ENCODE measurements at regions of chr16 and their contacts with region 1.

Region 1: DNA sequence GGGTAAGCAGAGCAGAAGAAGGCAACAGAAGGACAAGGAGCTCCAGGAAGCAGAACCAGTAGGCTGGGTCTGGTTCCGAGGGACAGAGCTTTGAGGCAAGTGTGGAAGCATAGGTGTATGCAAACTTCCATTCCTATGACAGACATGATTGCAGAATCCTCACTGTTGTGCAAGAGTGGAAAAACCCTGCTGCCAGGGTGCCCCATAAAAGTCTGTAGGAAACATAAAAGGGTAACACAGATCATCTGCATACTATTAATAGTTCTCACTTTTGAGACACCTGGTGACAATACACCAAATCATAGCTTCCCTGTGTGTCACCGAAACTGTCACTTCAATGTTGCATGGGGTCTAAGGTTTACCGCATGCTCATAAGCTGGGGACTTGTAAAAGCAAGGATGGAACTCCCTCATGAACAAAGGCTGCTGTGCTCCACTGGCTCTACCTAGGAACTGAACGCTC is 39.7 kb downstream of the ARHGAP17 start:
- DNase-seq: peak in 1 of 2 donors; percentile 72
- ATAC-seq: peak; percentile 78 to 84
- H3K4me3 ChIP-seq: no peak overlapping the region
- H3K27ac ChIP-seq: peak overlapping the region; percentile 67 to 89 (median 78)
- H3K4me1 ChIP-seq: peaks cover 68 to 81% of the 10 kb centered on the region in 2 donors
- H3K27me3 ChIP-seq: no peaks in the 10 kb centered on the region
- CTCF ChIP-seq: no peak
- POLR2A ChIP-seq: no peak

Region 2: GRCh38 chr16:24776501-24777220 is 198.8 kb before region 1 on chr16:
- in situ Hi-C with region 1: no loop called
- intact Hi-C with region 1: loop called (anchors 10 kb)
- DNase-seq: peak; percentile 73 to 75
- ATAC-seq: peak; percentile 93 to 96
- H3K4me3 ChIP-seq: peak overlapping the region in 1 of 4 donors; percentile 4
- H3K27ac ChIP-seq: peak overlapping the region; percentile 83 to 88 (median 86)
- H3K4me1 ChIP-seq: peaks cover 50 to 58% of the 10 kb centered on the region in 2 donors
- H3K27me3 ChIP-seq: no peaks in the 10 kb centered on the region
- CTCF ChIP-seq: no peak
- POLR2A ChIP-seq: no peak

Region 3: GRCh38 chr16:24999856-25000461 is 24.5 kb after region 1 on chr16:
- in situ Hi-C with region 1: no loop called
- intact Hi-C with region 1: loop called (anchors 1 kb)
- DNase-seq: peak; percentile 69 to 77
- ATAC-seq: peak; percentile 95 to 96
- H3K4me3 ChIP-seq: peak overlapping the region in 2 of 4 donors; percentile 1 to 12
- H3K27ac ChIP-seq: peak overlapping the region; percentile 75 to 88 (median 82)
- H3K4me1 ChIP-seq: peaks cover 60 to 65% of the 10 kb centered on the region in 2 donors
- H3K27me3 ChIP-seq: no peaks in the 10 kb centered on the region
- CTCF ChIP-seq: no peak
- POLR2A ChIP-seq: peak in 1 of 2 donors; percentile 18

Region 4: GRCh38 chr16:25014500-25015147 is 39.2 kb after region 1 on chr16:
- in situ Hi-C with region 1: no loop called
- intact Hi-C with region 1: loop called (anchors 2 kb)
- DNase-seq: peak; percentile 20 to 50
- ATAC-seq: peak; percentile 60 to 63
- H3K4me3 ChIP-seq: peak overlapping the region; percentile 75 to 83 (median 78)
- H3K27ac ChIP-seq: peak overlapping the region; percentile 86 to 97 (median 90)
- H3K4me1 ChIP-seq: peaks cover 46 to 47% of the 10 kb centered on the region in 2 donors
- H3K27me3 ChIP-seq: no peaks in the 10 kb centered on the region
- CTCF ChIP-seq: no peak
- POLR2A ChIP-seq: no peak

Region 5: DNA sequence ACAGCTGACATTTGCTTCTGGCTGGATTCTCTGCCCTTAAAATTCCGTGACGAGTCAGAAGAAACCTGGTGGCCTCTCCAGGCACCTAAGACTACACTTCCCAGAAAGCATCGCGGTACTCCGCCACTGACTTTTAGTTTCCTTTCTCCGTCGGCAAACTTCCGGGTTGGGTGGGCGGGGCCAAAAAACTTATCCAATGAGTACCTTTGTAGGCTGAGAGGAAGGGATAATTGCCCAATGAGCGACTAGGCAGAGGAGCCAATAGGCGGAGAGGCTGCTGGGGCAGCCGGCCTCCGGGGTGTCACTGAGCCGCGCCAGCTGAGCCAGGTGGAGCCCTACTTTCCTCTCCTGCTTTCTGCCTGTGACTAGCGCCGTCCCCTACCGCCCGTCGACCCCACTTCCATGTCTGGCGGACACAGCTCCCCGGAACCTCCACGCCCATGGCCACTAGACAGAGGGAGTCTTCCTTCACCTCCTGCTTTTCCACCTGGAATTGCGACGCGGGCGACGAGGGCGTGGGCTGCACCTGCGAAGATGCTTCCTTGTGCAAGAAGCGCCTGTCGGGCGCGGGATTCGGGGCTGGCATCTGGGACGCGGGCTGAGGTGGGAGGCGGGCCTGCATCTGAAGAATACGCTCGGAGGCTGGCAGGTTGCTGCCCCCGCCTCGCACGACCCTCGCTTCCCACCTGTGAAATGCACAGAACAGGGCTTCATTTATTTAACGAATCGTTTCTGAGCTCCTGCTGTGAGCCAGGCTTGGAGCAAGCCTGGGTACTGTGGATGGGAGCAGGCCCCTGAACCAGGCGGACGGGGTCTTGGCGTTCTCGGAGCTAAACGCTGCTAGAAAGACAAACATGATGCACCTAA is 56.2 kb after region 1 on chr16:
- in situ Hi-C with region 1: no loop called
- intact Hi-C with region 1: loop called (anchors 5 kb)
- DNase-seq: peak; percentile 91 to 93
- ATAC-seq: peak; percentile 99 to 100
- H3K4me3 ChIP-seq: peak overlapping the region; percentile 73 to 85 (median 80)
- H3K27ac ChIP-seq: peak overlapping the region; percentile 75 to 88 (median 82)
- H3K4me1 ChIP-seq: peaks cover 8 to 11% of the 10 kb centered on the region in 2 donors
- H3K27me3 ChIP-seq: no peaks in the 10 kb centered on the region
- CTCF ChIP-seq: peak in 1 of 5 experiments; percentile 13
- POLR2A ChIP-seq: peak; percentile 63

Region 6: GRCh38 chr16:25051406-25052150 is 76.1 kb after region 1 on chr16:
- in situ Hi-C with region 1: no loop called
- intact Hi-C with region 1: loop called (anchors 5 kb)
- DNase-seq: no peak
- ATAC-seq: peak; percentile 13 to 28
- H3K4me3 ChIP-seq: peak overlapping the region; percentile 2 to 37 (median 32)
- H3K27ac ChIP-seq: peak overlapping the region; percentile 63 to 93 (median 78)
- H3K4me1 ChIP-seq: peaks cover 25 to 27% of the 10 kb centered on the region in 2 donors
- H3K27me3 ChIP-seq: no peaks in the 10 kb centered on the region
- CTCF ChIP-seq: no peak
- POLR2A ChIP-seq: no peak

Measured in gastrocnemius medialis (tissue), 4 donors.